ENCODE measurements at regions of chr17 and their contacts with region 1.

Region 1: GRCh38 chr17:57548421-57549410 is 196.4 kb downstream of the CCDC182 start:
- DNase-seq: peak; percentile 81
- ATAC-seq: peak; percentile 82
- H3K4me3 ChIP-seq: no peak overlapping the region
- H3K27ac ChIP-seq: peak overlapping the region; percentile 74
- H3K4me1 ChIP-seq: peaks cover 96% of the 10 kb centered on the region
- H3K27me3 ChIP-seq: no peaks in the 10 kb centered on the region
- CTCF ChIP-seq: no peak
- EP300 ChIP-seq: peak in 1 of 2 experiments; percentile 79; a peak in 2 of 4 replicates
- POLR2A ChIP-seq: no peak
- RAD21 ChIP-seq: no peak

Region 2: DNA sequence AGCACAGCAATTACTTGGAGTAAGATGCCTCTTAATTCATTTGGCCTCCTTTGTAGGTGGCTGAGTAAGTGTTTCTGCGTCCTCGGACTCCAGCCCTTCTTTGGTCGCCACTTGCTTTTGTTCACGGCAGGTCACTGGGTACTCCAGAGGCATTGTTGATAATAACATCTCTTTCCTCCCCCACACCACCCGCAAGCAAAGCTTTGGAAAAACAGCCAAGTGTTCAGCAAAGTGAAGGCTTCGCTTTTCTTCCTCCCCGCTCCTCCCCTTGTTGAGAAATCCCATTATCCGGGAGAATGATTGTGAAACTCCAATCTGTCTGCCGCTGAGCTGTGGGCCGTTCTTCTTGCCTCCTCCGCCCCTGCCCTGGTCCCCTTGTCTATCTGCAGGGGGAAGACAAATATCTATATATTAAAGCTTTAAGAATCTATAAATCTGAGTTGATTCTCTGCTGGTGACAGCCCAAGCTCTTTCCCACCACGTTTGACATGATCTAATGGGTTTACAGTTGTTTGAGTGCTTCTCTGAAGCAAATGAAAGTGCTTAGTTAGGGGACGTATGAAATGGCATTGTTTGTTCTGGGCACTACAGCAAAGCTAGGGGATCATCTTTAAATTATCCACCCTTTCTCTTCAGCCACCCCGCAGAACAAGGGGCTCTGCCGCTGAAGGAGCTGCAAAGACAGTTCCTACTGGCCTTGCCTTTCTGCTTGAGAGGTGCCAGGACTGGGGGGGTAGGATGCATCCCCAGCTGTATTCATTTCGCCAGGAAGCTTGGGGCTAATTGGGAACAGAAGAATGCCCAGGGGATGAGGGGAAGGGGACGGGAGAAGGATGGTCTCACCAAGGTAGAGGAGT is 29.3 kb after region 1 on chr17:
- CTCF ChIA-PET with region 1: no interaction called
- POLR2A ChIA-PET with region 1: interaction called, 16 read pairs
- in situ Hi-C with region 1: no loop called
- intact Hi-C with region 1: no loop called
- DNase-seq: peak; percentile 95
- ATAC-seq: peak; percentile 80
- H3K4me3 ChIP-seq: peak overlapping the region; percentile 17 to 56 (median 24); a peak in 5 of 6 replicates
- H3K27ac ChIP-seq: peak overlapping the region; percentile 75
- H3K4me1 ChIP-seq: peaks cover 84% of the 10 kb centered on the region
- H3K27me3 ChIP-seq: no peaks in the 10 kb centered on the region
- CTCF ChIP-seq: no peak; the same call in 1 of the 2 replicates
- EP300 ChIP-seq: peak; percentile 77 to 96; a peak in 3 of 4 replicates
- POLR2A ChIP-seq: 0 out of 4 replicates have a peak, but pooled peaks of 1 of the 2 experiments have one; percentile 13
- RAD21 ChIP-seq: no peak

Region 3: DNA sequence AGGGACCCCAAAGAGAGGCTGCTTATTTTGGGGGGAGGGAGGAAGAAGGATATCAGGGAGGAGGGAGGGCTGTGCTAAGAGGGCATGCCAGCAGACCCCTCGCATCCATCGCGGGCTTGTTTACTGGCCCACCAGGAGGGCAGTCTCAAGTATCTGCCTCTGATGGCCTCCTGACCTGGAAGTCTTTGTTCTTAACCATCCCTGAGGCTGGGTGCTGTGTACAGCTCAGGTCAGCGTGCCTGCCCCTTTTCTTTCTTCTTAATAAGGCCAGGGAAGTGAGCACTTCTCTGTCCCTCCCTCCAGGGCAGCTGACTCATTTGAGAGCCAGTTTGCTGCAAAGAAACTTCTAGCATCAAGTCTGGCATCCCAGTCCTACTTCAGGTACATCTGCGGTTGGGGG is 39.4 kb after region 1 on chr17:
- CTCF ChIA-PET with region 1: no interaction called
- POLR2A ChIA-PET with region 1: no interaction called
- in situ Hi-C with region 1: no loop called
- intact Hi-C with region 1: no loop called
- DNase-seq: no peak
- ATAC-seq: no peak
- H3K4me3 ChIP-seq: no peak overlapping the region
- H3K27ac ChIP-seq: no peak overlapping the region
- H3K4me1 ChIP-seq: peaks cover 30% of the 10 kb centered on the region
- H3K27me3 ChIP-seq: no peaks in the 10 kb centered on the region
- CTCF ChIP-seq: no peak
- EP300 ChIP-seq: no peak
- POLR2A ChIP-seq: no peak
- RAD21 ChIP-seq: no peak

Region 4: GRCh38 chr17:57657201-57657600 is 108.5 kb after region 1 on chr17:
- CTCF ChIA-PET with region 1: no interaction called
- POLR2A ChIA-PET with region 1: no interaction called
- in situ Hi-C with region 1: no loop called
- intact Hi-C with region 1: no loop called
- DNase-seq: no peak
- ATAC-seq: no peak
- H3K4me3 ChIP-seq: no peak overlapping the region
- H3K27ac ChIP-seq: no peak overlapping the region
- H3K4me1 ChIP-seq: no peaks in the 10 kb centered on the region
- H3K27me3 ChIP-seq: no peaks in the 10 kb centered on the region
- CTCF ChIP-seq: no peak
- EP300 ChIP-seq: no peak
- POLR2A ChIP-seq: no peak
- RAD21 ChIP-seq: no peak

Region 5: GRCh38 chr17:57667461-57667923 is 118.8 kb after region 1 on chr17:
- CTCF ChIA-PET with region 1: no interaction called
- POLR2A ChIA-PET with region 1: no interaction called
- in situ Hi-C with region 1: no loop called
- intact Hi-C with region 1: no loop called
- DNase-seq: no peak
- ATAC-seq: no peak
- H3K4me3 ChIP-seq: no peak overlapping the region
- H3K27ac ChIP-seq: no peak overlapping the region
- H3K4me1 ChIP-seq: no peaks in the 10 kb centered on the region
- H3K27me3 ChIP-seq: no peaks in the 10 kb centered on the region
- CTCF ChIP-seq: no peak
- EP300 ChIP-seq: no peak
- POLR2A ChIP-seq: no peak
- RAD21 ChIP-seq: no peak

Measured in HepG2 (cell line).